ENCODE measurements at regions of chr2 and their contacts with region 1.

Region 1: GRCh38 chr2:188122985-188123384 is 168.7 kb upstream of the GULP1 start:
- DNase-seq: no peak
- H3K4me3 ChIP-seq: no peak overlapping the region
- CTCF ChIP-seq: no peak

Region 2: GRCh38 chr2:188065395-188065794 is 57.6 kb before region 1 on chr2:
- in situ Hi-C with region 1: no loop called
- DNase-seq: no peak
- H3K4me3 ChIP-seq: no peak overlapping the region
- CTCF ChIP-seq: no peak

Region 3: DNA sequence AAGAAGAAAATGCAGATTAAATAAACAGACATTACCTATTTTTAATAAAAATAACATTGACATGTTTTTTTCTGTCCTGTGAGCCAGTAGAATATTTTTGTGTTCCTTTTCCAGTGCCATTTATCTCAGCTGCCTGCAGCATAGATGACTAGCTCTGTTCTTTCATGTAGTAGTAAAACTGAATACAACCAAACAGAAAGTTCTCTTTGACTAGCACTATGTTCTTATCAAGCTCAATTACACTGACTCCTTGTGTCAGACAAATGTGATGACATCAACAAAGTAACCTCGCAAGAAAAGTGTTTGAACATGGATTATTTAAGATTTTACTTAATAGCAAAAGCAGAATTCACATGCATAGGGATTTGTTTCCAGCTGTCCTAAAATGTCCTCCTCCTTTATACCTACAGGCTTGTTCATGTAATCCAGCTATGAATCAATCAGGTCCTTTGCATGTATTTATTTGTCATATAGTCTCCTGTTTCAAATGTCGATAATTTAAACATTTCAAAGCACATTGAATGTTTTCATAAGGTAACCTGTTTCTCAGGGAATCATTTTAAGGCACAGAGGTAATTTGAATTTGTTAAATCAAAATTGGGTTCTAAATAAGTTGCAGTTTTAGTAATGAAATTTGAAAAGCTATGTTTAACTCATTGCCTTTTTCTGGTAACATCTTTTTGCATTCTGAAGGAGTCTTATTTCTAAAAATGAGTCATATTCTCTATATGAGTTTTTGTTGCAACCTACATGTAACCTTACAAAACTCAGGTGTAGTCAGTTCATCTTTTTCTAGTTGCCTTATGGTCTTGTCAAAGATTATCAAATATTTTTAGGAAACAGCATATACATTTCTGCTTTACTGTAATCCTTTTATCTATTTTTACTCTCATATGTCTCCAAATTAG is 46.6 kb before region 1 on chr2:
- in situ Hi-C with region 1: loop called (anchors 5 kb)
- DNase-seq: no peak
- H3K4me3 ChIP-seq: no peak overlapping the region
- CTCF ChIP-seq: no peak